ENCODE measurements at regions of chr1 and their contacts with region 1.

Region 1: DNA sequence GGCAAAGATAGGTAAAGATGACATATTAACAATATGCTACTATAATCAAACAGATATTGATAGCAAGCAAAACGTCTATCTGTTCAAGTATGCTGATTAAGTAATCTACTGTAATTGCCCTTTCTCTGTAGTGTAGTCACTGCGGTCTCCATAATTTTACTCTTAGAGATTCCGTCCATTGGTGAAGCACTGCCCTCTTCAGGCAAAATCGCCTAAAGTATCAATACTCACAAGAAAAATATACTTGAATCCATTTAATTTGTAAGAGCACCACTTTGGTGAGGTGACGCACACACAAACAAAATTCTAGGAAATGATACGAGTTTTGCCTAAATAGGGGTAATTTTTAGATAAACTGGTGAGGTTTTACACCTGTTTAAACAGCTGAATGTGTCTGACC is 434.6 kb upstream of the CHRM3 start:
- DNase-seq: peak; percentile 50
- ATAC-seq: no peak
- H3K4me3 ChIP-seq: no peak overlapping the region
- H3K27ac ChIP-seq: no peak overlapping the region
- H3K4me1 ChIP-seq: no peaks in the 10 kb centered on the region
- H3K27me3 ChIP-seq: no peaks in the 10 kb centered on the region
- CTCF ChIP-seq: peak; percentile 51; the same call in 1 of the 2 replicates

Region 2: DNA sequence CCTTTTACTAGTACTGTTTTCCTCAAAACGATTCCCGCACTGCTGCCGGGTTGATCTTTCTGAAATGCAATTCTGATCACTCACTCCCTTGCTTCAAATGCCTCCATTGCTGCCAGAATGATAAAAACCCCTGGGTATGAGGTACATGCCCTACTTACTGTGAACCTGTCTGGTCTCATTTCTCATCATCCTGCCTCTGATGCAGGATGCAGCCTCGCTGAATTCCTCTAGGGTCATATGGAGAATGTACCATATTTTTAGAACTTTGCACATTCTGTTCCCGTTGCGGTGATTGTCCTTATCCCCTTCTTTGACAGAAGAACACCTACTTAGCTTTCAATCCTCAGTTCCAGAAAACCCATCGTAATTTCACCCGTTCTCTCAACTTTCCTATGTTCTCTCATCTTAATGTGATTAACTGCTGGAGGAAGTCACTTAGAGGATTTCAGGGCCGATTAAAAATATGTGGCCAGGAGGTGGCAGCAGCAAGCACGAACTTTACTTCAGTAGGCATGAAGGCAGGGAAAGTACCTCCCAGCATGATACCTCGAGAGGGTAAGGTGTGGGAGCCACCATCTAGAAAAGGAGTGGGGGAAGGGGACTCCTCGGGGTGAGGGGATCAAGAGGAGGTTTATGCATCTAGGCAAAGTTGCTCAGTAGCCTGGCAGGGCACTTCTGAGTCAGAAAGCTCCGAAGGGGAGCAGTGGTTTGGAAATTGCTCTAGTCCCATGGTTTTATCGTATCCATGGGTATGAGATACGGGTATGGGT is 699.6 kb before region 1 on chr1:
- CTCF ChIA-PET with region 1: no interaction called
- POLR2A ChIA-PET with region 1: no interaction called
- in situ Hi-C with region 1: no loop called
- intact Hi-C with region 1: loop called (anchors 5 kb)
- DNase-seq: peak; percentile 42
- ATAC-seq: peak; percentile 65
- H3K4me3 ChIP-seq: no peak overlapping the region
- H3K27ac ChIP-seq: no peak overlapping the region
- H3K4me1 ChIP-seq: no peaks in the 10 kb centered on the region
- H3K27me3 ChIP-seq: no peaks in the 10 kb centered on the region
- CTCF ChIP-seq: peak; percentile 75

Region 3: GRCh38 chr1:238832106-238832505 is 119.7 kb before region 1 on chr1:
- CTCF ChIA-PET with region 1: no interaction called
- POLR2A ChIA-PET with region 1: no interaction called
- in situ Hi-C with region 1: no loop called
- intact Hi-C with region 1: no loop called
- DNase-seq: no peak
- ATAC-seq: no peak
- H3K4me3 ChIP-seq: no peak overlapping the region
- H3K27ac ChIP-seq: no peak overlapping the region
- H3K4me1 ChIP-seq: no peaks in the 10 kb centered on the region
- H3K27me3 ChIP-seq: no peaks in the 10 kb centered on the region
- CTCF ChIP-seq: no peak

Region 4: DNA sequence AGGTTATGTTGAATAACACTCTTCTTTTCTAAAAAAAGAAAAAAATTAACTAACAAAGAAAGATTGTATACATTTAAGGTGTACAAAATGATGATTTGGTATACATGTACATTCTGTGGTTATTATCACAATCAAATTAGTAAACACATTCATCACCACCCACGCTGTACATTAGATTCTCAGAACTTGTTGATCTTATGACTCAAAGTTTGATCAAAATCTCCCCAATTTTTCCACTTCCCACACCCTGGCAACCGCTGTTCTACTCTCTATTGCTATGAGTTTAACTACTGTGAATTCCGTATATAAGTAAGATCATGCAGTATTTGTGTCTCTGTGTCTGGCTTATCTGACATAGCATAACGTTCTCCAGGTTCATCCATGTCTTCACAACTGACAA is 35.0 kb before region 1 on chr1:
- CTCF ChIA-PET with region 1: no interaction called
- POLR2A ChIA-PET with region 1: no interaction called
- in situ Hi-C with region 1: no loop called
- intact Hi-C with region 1: no loop called
- DNase-seq: no peak
- ATAC-seq: no peak
- H3K4me3 ChIP-seq: no peak overlapping the region
- H3K27ac ChIP-seq: no peak overlapping the region
- H3K4me1 ChIP-seq: no peaks in the 10 kb centered on the region
- H3K27me3 ChIP-seq: no peaks in the 10 kb centered on the region
- CTCF ChIP-seq: no peak